H1 (cell line): ENCODE measurements at regions of chr17 and their contacts with region 1.

Region 1: GRCh38 chr17:1399679-1400512 is at the start of gene YWHAE:
- DNase-seq: peak; percentile 84 to 97
- H3K4me3 ChIP-seq: peak within 1 kb of the TSS; percentile 74 to 100 (median 97)
- H3K27ac ChIP-seq: peak within 1 kb of the TSS; percentile 98
- H3K4me1 ChIP-seq: peaks cover 0 to 5% (median 2%) of the 10 kb centered on the region in 4 experiments; a peak in 5 of 7 replicates
- H3K27me3 ChIP-seq: no peaks in the 10 kb centered on the region; a peak in 1 of 7 replicates
- CTCF ChIP-seq: no peak
- EP300 ChIP-seq: peak in 1 of 2 experiments; percentile 65; a peak in 1 of 3 replicates
- POLR2A ChIP-seq: peak; percentile 91 to 97
- RAD21 ChIP-seq: no peak
- total RNA-seq, gene YWHAE: 1,186 and 1,198 TPM in 2 replicates

Region 2: GRCh38 chr17:1374431-1375177 is 25.3 kb before region 1 on chr17:
- CTCF ChIA-PET with region 1: no interaction called
- POLR2A ChIA-PET with region 1: interaction called, 82 read pairs
- DNase-seq: no peak
- H3K4me3 ChIP-seq: no peak overlapping the region
- H3K27ac ChIP-seq: no peak overlapping the region
- H3K4me1 ChIP-seq: no peaks in the 10 kb centered on the region; a peak in 2 of 7 replicates
- H3K27me3 ChIP-seq: no peaks in the 10 kb centered on the region
- CTCF ChIP-seq: no peak
- EP300 ChIP-seq: no peak
- POLR2A ChIP-seq: 0 out of 3 replicates have a peak, but pooled peaks of 1 of the 2 experiments have one; percentile 26
- RAD21 ChIP-seq: no peak

Region 3: GRCh38 chr17:1384905-1385435 is 14.9 kb before region 1 on chr17:
- CTCF ChIA-PET with region 1: interaction called, 3 read pairs
- POLR2A ChIA-PET with region 1: interaction called, 82 read pairs
- DNase-seq: no peak
- H3K4me3 ChIP-seq: no peak overlapping the region
- H3K27ac ChIP-seq: no peak overlapping the region
- H3K4me1 ChIP-seq: peaks cover 0 to 3% (median 1%) of the 10 kb centered on the region in 4 experiments; a peak in 3 of 7 replicates
- H3K27me3 ChIP-seq: no peaks in the 10 kb centered on the region
- CTCF ChIP-seq: no peak
- EP300 ChIP-seq: no peak
- POLR2A ChIP-seq: no peak
- RAD21 ChIP-seq: no peak

Region 4: GRCh38 chr17:1422907-1423306 is 23.0 kb after region 1 on chr17:
- CTCF ChIA-PET with region 1: no interaction called
- POLR2A ChIA-PET with region 1: interaction called, 19 read pairs
- DNase-seq: no peak
- H3K4me3 ChIP-seq: no peak overlapping the region
- H3K27ac ChIP-seq: no peak overlapping the region
- H3K4me1 ChIP-seq: no peaks in the 10 kb centered on the region
- H3K27me3 ChIP-seq: no peaks in the 10 kb centered on the region
- CTCF ChIP-seq: no peak
- EP300 ChIP-seq: no peak
- POLR2A ChIP-seq: no peak
- RAD21 ChIP-seq: no peak

Region 5: GRCh38 chr17:1606352-1607033 is 206.6 kb after region 1 on chr17:
- CTCF ChIA-PET with region 1: no interaction called
- POLR2A ChIA-PET with region 1: no interaction called
- DNase-seq: no peak
- H3K4me3 ChIP-seq: no peak overlapping the region
- H3K27ac ChIP-seq: no peak overlapping the region
- H3K4me1 ChIP-seq: peaks cover 0 to 14% (median 11%) of the 10 kb centered on the region in 4 experiments; a peak in 6 of 7 replicates
- H3K27me3 ChIP-seq: no peaks in the 10 kb centered on the region
- CTCF ChIP-seq: no peak
- EP300 ChIP-seq: no peak
- POLR2A ChIP-seq: no peak
- RAD21 ChIP-seq: no peak